ENCODE measurements at regions of chr2 and their contacts with region 1.

Region 1: GRCh38 chr2:39913648-39914461 is 134.8 kb upstream of the THUMPD2 start:
- DNase-seq: no peak
- H3K4me3 Mint-ChIP-seq: no peak overlapping the region
- H3K27ac Mint-ChIP-seq: peak overlapping the region; percentile 15
- H3K4me1 Mint-ChIP-seq: peaks cover 5% of the 10 kb centered on the region
- H3K27me3 Mint-ChIP-seq: peaks cover 13% of the 10 kb centered on the region

Region 2: DNA sequence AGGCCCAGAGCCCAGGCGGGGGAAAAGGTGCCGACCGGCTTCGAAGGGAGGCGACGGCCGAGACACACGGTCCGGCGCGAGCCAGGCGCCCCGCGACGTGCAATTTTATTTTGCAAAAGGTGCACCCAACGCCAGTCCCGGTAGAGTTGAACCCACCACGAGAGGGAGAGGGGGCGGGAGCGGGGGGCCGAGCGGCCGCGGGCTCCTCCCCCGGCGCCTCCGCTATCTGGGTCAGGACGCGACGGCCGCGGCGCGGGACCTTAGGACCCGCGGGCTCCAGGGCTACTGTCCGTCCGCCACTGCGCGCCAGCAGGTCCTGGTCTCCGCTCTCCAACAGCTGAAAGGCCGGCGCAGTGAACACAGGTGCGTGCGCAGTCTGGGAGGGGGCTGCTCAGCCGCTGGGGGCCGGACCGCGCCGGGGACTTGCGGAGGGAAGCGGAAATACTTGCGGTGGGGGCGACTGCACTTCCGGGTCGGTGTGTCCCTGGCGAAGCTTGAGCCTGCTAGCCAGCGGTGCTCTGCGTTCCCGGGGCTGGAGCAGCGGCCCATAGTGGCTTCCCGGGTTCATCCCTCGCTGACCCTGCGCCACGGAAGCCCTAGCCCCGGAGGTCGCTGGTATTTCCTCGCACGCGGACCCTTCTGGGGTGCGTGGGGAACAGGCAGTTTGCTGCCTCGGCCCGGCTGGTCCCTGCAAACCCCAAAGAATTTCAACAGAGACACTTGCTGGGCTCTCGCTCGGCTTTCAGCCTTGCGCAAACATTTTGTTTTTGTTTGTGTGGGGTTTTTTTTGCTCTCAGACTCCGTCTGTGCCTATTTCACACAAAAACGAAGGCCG is 1988.6 kb before region 1 on chr2 and contains the start of gene RMDN2:
- CTCF ChIA-PET with region 1: no interaction called
- intact Hi-C with region 1: no loop called
- DNase-seq: peak; percentile 83
- H3K4me3 Mint-ChIP-seq: peak within 1 kb of the TSS; percentile 81
- H3K27ac Mint-ChIP-seq: peak within 1 kb of the TSS; percentile 68
- H3K4me1 Mint-ChIP-seq: peaks cover 8% of the 10 kb centered on the region
- H3K27me3 Mint-ChIP-seq: no peaks in the 10 kb centered on the region
- total RNA-seq, gene RMDN2: 0.79 to 1.2 TPM

Region 3: DNA sequence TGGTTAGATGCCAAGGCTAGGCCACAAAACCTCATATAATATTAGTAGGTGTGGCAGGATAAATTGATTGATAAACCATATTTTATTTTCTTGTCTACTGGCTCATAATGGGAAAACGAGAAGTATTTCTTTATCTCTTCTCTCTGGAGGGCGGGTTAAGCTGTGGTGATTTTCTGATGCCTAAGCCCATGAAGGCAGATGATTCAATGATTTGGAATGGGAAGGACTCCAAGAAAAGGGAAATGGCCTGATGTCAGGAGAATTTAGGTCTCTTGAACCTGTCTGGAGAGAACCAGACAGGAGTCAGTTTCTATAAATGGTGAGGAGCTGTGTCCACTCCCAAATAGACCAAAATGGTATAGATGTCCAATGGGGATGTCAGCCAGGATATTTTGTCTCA is 458.0 kb before region 1 on chr2:
- CTCF ChIA-PET with region 1: no interaction called
- intact Hi-C with region 1: no loop called
- DNase-seq: no peak
- H3K4me3 Mint-ChIP-seq: no peak overlapping the region
- H3K27ac Mint-ChIP-seq: no peak overlapping the region
- H3K4me1 Mint-ChIP-seq: no peaks in the 10 kb centered on the region
- H3K27me3 Mint-ChIP-seq: no peaks in the 10 kb centered on the region

Region 4: DNA sequence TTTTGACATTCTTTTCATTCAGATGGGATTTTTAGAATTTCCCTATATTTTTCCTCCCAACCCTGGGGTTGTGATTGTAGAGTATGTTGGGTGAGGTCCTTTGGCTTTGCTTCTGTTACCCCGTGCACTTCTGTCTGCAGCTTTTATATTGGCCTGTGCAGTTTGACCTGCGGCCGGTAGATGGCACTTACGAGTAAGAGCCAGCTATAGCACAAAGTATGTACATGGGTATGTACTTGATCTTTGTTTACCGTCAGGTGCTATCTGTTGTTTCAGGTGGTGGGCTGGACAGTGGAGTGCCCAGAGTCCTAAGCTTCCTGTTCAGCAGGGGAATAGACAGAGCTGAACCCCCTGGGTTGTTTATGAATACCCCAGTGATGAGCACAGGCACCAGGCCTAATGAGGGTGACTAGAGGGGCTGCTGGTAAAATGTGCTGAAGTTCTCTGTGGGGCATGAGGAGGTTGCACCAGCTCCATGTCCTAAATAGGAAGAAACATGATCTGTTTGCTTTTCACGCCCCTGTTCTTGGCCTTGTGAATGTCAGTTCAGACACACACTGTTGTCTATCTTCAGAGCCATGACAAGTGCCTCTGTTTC is 75.9 kb before region 1 on chr2:
- CTCF ChIA-PET with region 1: no interaction called
- intact Hi-C with region 1: no loop called
- DNase-seq: peak; percentile 13
- H3K4me3 Mint-ChIP-seq: no peak overlapping the region
- H3K27ac Mint-ChIP-seq: no peak overlapping the region
- H3K4me1 Mint-ChIP-seq: no peaks in the 10 kb centered on the region
- H3K27me3 Mint-ChIP-seq: peaks cover 7% of the 10 kb centered on the region

Region 5: GRCh38 chr2:40212804-40213470 is 299.1 kb after region 1 on chr2:
- CTCF ChIA-PET with region 1: no interaction called
- intact Hi-C with region 1: loop called (anchors 5 kb)
- DNase-seq: no peak
- H3K4me3 Mint-ChIP-seq: no peak overlapping the region
- H3K27ac Mint-ChIP-seq: no peak overlapping the region
- H3K4me1 Mint-ChIP-seq: peaks cover 2% of the 10 kb centered on the region
- H3K27me3 Mint-ChIP-seq: peaks cover 2% of the 10 kb centered on the region

Region 6: GRCh38 chr2:40448468-40449079 is 534.7 kb after region 1 on chr2:
- CTCF ChIA-PET with region 1: interaction called, 3 read pairs
- intact Hi-C with region 1: loop called (anchors 5 kb)
- DNase-seq: peak; percentile 14
- H3K4me3 Mint-ChIP-seq: no peak overlapping the region
- H3K27ac Mint-ChIP-seq: no peak overlapping the region
- H3K4me1 Mint-ChIP-seq: peaks cover 23% of the 10 kb centered on the region
- H3K27me3 Mint-ChIP-seq: peaks cover 39% of the 10 kb centered on the region

Region 7: DNA sequence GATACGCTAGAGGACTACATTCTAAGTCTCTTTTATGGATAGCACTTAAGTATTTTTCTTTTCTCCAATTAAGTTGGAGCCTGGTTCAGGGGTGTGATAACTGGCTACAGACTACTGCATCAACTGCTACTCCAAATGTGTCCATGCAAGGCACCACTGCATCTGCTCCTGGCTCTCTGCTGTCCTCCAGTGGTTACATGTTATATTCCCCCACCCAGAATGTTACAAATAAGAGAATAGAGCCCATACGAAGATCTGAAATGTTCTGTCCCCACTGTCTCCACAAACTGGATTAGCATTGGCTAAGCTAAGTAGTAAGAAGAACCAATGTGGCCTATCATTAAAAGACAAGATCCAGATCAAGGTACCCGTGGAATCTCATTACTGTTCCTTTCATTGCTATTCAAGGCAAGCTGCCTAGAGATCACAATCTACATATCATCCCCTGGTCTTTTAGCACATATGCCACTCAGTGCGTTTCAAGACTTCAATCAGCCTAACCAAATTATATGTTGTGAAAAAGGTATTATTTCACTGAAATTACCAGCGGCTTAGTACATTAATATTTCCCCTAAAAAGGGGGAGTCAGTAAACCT is 846.3 kb after region 1 on chr2:
- CTCF ChIA-PET with region 1: no interaction called
- intact Hi-C with region 1: loop called (anchors 1 kb)
- DNase-seq: peak; percentile 10
- H3K4me3 Mint-ChIP-seq: no peak overlapping the region
- H3K27ac Mint-ChIP-seq: no peak overlapping the region
- H3K4me1 Mint-ChIP-seq: peaks cover 2% of the 10 kb centered on the region
- H3K27me3 Mint-ChIP-seq: no peaks in the 10 kb centered on the region

Region 8: DNA sequence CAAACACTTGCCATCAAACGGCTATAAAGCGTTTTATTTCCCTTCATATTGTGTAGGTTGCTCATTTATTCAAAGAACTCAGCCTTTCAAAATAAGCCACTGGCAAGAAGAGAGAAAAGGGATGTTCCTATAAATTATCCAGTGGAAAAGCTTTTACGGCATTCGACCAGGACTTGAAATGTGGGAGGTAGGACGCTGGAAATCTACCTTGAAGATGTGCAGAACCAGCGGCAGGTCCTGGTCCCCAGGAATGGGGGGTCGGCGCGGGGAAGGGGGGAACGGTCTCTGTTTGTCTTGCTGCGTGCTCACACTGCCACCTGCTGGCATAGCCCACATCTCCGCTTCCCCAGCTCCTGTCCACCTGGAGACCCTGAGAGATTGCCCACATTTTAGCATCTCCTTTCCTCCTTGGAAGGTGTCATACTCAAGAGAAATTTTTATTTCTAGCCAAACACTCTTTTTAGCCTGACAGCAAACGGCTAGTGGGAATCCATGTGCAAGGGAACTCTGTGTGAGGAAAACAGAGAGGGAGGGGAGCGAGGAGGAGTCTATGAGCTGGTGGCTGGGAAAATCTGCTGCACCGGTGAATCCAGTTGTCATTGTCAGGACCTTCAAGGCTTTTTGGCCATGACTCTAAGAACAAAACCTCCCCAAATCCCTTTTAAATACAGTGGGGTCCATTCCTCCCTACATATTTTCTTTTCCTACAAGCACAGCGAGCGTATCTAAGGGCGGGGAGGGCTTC is 1785.0 kb after region 1 on chr2:
- CTCF ChIA-PET with region 1: no interaction called
- intact Hi-C with region 1: loop called (anchors 2 kb)
- DNase-seq: peak; percentile 27
- H3K4me3 Mint-ChIP-seq: no peak overlapping the region
- H3K27ac Mint-ChIP-seq: no peak overlapping the region
- H3K4me1 Mint-ChIP-seq: no peaks in the 10 kb centered on the region
- H3K27me3 Mint-ChIP-seq: no peaks in the 10 kb centered on the region

Measured in activated naive CD4-positive, alpha-beta T cell treated with anti-CD3 and anti-CD28 coated beads for 36 hours (primary cell).